ENCODE measurements at regions of chr7 and their contacts with region 1.

Region 1: GRCh38 chr7:104883718-104884452 is 130.1 kb upstream of the KMT2E start:
- DNase-seq: peak; percentile 61
- ATAC-seq: peak; percentile 92
- H3K4me3 ChIP-seq: no peak overlapping the region
- H3K27ac ChIP-seq: no peak overlapping the region
- H3K4me1 ChIP-seq: peaks cover 19% of the 10 kb centered on the region
- H3K27me3 ChIP-seq: no peaks in the 10 kb centered on the region
- CTCF ChIP-seq: peak; percentile 93 to 96 (median 94); a peak in 5 of 6 replicates
- EP300 ChIP-seq: no peak
- POLR2A ChIP-seq: no peak
- RAD21 ChIP-seq: peak; percentile 89

Region 2: DNA sequence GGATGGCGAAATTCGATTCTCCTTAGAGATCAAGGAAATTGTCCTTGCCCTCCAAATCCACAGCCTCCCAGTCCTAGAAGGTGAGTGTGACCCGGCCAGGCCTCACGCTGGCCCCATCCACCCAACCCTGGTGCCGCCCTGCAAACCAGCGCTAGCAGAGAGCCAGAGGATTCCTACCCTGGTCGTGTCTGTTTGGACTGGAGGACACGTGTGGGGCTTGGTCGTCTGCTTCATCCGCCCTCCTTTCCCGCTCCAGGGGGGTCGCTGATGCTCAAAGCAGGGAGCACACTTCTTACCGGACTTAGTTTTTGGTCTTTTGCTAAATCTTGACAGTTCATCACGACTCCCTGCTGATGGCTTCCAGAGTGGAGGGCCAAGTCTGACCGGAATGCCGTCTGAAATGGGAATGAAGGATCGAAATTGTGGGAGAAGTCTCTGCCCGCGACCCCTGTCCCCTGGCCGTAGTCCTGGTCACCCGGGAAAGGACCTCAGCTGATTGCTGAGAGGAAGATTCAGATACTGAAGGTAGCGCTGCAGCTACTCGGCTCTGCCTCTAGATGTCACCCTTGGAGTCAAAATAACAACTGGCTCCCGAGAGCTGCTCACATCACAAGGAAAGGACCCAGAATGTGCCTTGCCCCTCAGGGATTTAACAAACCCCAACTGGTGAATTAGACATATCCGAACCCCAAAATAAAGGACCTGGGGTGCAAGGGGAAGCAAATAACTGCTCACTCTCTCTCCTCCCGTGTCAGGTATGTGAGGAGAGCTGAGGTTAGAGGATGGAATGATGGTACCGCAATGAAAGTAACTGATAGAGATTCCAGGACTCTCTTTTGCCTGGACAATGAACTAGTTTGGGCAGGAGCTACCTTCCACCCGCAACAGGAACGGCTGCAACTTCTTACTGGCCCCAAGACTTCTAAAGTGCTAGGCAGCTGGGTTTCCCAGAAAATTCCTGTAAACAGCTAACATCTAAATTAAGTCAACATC is 652.5 kb before region 1 on chr7:
- CTCF ChIA-PET with region 1: interaction called, 18 read pairs
- POLR2A ChIA-PET with region 1: no interaction called
- RAD21 ChIA-PET with region 1: interaction called, 13 read pairs
- SMC1A ChIA-PET with region 1: interaction called, 3 read pairs
- in situ Hi-C with region 1: no loop called
- intact Hi-C with region 1: no loop called
- DNase-seq: no peak
- ATAC-seq: peak; percentile 96
- H3K4me3 ChIP-seq: no peak overlapping the region
- H3K27ac ChIP-seq: no peak overlapping the region
- H3K4me1 ChIP-seq: no peaks in the 10 kb centered on the region
- H3K27me3 ChIP-seq: no peaks in the 10 kb centered on the region
- CTCF ChIP-seq: peak; percentile 83 to 91 (median 87)
- EP300 ChIP-seq: no peak
- POLR2A ChIP-seq: no peak
- RAD21 ChIP-seq: peak; percentile 74

Region 3: GRCh38 chr7:104415700-104416099 is 468.2 kb before region 1 on chr7:
- CTCF ChIA-PET with region 1: no interaction called
- POLR2A ChIA-PET with region 1: no interaction called
- RAD21 ChIA-PET with region 1: no interaction called
- SMC1A ChIA-PET with region 1: no interaction called
- in situ Hi-C with region 1: no loop called
- intact Hi-C with region 1: no loop called
- DNase-seq: no peak
- ATAC-seq: peak; percentile 51; the same call in 2 of the 3 replicates
- H3K4me3 ChIP-seq: no peak overlapping the region
- H3K27ac ChIP-seq: no peak overlapping the region
- H3K4me1 ChIP-seq: no peaks in the 10 kb centered on the region
- H3K27me3 ChIP-seq: no peaks in the 10 kb centered on the region; a peak in 1 of 4 replicates
- CTCF ChIP-seq: no peak
- EP300 ChIP-seq: no peak
- POLR2A ChIP-seq: no peak
- RAD21 ChIP-seq: peak; percentile 9; the same call in 1 of the 2 replicates

Region 4: DNA sequence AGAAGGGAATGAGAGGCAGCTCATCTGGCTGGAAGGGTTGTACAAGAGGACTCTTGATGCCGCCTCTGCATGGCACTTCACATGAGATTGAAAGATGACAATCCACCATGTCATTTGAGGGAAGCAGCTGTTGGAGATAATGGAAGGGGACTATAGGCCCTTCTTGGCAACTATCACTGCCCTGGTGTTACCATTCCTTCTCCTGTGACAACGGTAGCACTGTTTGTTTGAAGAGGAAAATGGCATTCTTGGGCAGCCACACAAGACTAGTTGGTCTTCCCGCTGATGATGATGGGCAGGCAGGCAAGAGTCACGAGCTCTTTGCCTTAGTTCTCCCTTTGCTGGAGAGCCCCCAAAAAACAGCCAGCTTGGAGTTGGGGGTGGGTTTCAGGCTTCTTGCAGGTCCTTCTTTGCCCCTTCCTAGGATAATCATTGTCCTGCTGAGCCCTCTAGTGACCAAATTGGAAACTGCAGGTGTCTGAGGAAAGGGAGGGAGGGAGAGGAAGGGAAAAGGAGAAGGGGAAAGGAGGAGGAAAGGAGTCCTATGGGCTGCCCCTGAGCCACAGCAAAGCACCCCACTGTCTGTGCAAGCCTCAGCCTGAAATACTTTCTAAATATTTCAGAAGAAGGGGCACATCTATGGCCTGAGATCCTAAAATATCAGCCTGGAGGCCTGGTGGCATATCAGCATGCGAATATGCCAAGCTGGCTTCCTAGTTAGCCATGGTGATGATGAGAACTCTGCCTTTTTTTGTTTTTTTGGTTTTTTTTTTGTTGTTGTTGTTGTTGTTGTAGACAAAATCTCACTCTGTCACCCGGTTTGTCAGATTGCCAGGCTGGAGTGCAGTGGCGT is 35.5 kb before region 1 on chr7:
- CTCF ChIA-PET with region 1: interaction called, 16 read pairs
- POLR2A ChIA-PET with region 1: no interaction called
- RAD21 ChIA-PET with region 1: interaction called, 5 read pairs
- SMC1A ChIA-PET with region 1: interaction called, 18 read pairs
- in situ Hi-C with region 1: no loop called
- intact Hi-C with region 1: no loop called
- DNase-seq: no peak
- ATAC-seq: peak; percentile 78
- H3K4me3 ChIP-seq: no peak overlapping the region
- H3K27ac ChIP-seq: no peak overlapping the region
- H3K4me1 ChIP-seq: peaks cover 4% of the 10 kb centered on the region; the same call in 1 of the 2 replicates
- H3K27me3 ChIP-seq: no peaks in the 10 kb centered on the region
- CTCF ChIP-seq: peak; percentile 76 to 89 (median 79)
- EP300 ChIP-seq: no peak
- POLR2A ChIP-seq: no peak
- RAD21 ChIP-seq: peak; percentile 90

Region 5: GRCh38 chr7:104862719-104863118 is 21.2 kb before region 1 on chr7:
- CTCF ChIA-PET with region 1: interaction called, 24 read pairs
- POLR2A ChIA-PET with region 1: interaction called, 6 read pairs
- RAD21 ChIA-PET with region 1: interaction called, 7 read pairs
- SMC1A ChIA-PET with region 1: interaction called, 13 read pairs
- in situ Hi-C with region 1: no loop called
- intact Hi-C with region 1: no loop called
- DNase-seq: no peak
- ATAC-seq: no peak; the same call in 2 of the 3 replicates
- H3K4me3 ChIP-seq: no peak overlapping the region
- H3K27ac ChIP-seq: no peak overlapping the region
- H3K4me1 ChIP-seq: peaks cover 8% of the 10 kb centered on the region
- H3K27me3 ChIP-seq: no peaks in the 10 kb centered on the region
- CTCF ChIP-seq: no peak
- EP300 ChIP-seq: no peak
- POLR2A ChIP-seq: no peak
- RAD21 ChIP-seq: no peak

Region 6: DNA sequence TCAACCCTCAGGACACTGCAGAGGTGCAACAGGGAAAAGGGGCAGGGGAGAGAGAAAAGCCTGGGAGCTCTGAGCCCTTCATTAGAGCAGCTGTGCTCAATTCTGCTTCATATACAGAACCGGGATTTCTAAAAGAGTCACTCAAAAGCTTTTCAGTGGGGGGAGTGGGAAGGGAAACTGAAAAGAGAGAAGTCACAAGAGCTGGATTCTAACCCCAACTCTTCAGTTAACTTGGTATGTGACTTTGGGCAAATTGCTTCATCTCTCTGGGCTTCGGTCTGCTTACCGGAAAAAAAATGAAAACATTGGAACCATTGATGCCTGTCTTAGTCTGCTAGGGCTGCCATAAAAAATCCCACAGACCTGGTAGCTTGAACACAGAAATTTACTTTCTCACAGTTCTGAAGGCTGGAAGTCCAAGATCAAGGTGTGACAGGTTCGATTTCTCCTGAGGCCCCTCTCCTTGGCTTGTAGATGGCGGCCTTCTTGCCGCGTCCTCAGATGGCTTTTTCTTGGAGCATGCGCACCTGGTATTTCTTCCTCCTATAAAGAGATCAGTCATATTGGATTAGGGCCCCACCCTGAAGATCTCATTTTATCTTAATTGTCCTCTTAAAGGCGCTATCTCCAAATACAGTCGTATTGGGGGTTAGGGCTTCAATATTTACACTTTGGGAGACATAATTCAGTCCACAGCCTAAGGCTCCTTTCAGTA is 11.8 kb after region 1 on chr7:
- CTCF ChIA-PET with region 1: interaction called, 298 read pairs
- POLR2A ChIA-PET with region 1: interaction called, 25 read pairs
- RAD21 ChIA-PET with region 1: interaction called, 147 read pairs
- SMC1A ChIA-PET with region 1: interaction called, 236 read pairs
- in situ Hi-C with region 1: no loop called
- intact Hi-C with region 1: loop called (anchors 1 kb)
- DNase-seq: peak; percentile 83
- ATAC-seq: peak; percentile 55
- H3K4me3 ChIP-seq: peak overlapping the region; percentile 69
- H3K27ac ChIP-seq: peak overlapping the region; percentile 97
- H3K4me1 ChIP-seq: peaks cover 69% of the 10 kb centered on the region
- H3K27me3 ChIP-seq: no peaks in the 10 kb centered on the region
- CTCF ChIP-seq: no peak
- EP300 ChIP-seq: peak; percentile 58 to 60; a peak in 1 of 4 replicates
- POLR2A ChIP-seq: no peak
- RAD21 ChIP-seq: no peak

Region 7: GRCh38 chr7:104914421-104914820 is 30.5 kb after region 1 on chr7:
- CTCF ChIA-PET with region 1: interaction called, 581 read pairs
- POLR2A ChIA-PET with region 1: interaction called, 15 read pairs
- RAD21 ChIA-PET with region 1: interaction called, 217 read pairs
- SMC1A ChIA-PET with region 1: interaction called, 413 read pairs
- in situ Hi-C with region 1: loop called (anchors 5 kb)
- intact Hi-C with region 1: loop called (anchors 1 kb)
- DNase-seq: no peak
- ATAC-seq: no peak
- H3K4me3 ChIP-seq: no peak overlapping the region
- H3K27ac ChIP-seq: no peak overlapping the region
- H3K4me1 ChIP-seq: peaks cover 4% of the 10 kb centered on the region; the same call in 1 of the 2 replicates
- H3K27me3 ChIP-seq: no peaks in the 10 kb centered on the region
- CTCF ChIP-seq: no peak
- EP300 ChIP-seq: no peak
- POLR2A ChIP-seq: no peak
- RAD21 ChIP-seq: no peak

Region 8: GRCh38 chr7:105187302-105188169 is 303.7 kb after region 1 on chr7:
- CTCF ChIA-PET with region 1: no interaction called
- POLR2A ChIA-PET with region 1: no interaction called
- RAD21 ChIA-PET with region 1: no interaction called
- SMC1A ChIA-PET with region 1: no interaction called
- in situ Hi-C with region 1: no loop called
- intact Hi-C with region 1: no loop called
- DNase-seq: peak; percentile 37
- ATAC-seq: peak; percentile 83
- H3K4me3 ChIP-seq: peak overlapping the region; percentile 6; the same call in 1 of the 2 replicates
- H3K27ac ChIP-seq: peak overlapping the region; percentile 13; the same call in 1 of the 2 replicates
- H3K4me1 ChIP-seq: peaks cover 11% of the 10 kb centered on the region; the same call in 1 of the 2 replicates
- H3K27me3 ChIP-seq: no peaks in the 10 kb centered on the region
- CTCF ChIP-seq: no peak
- EP300 ChIP-seq: no peak
- POLR2A ChIP-seq: no peak
- RAD21 ChIP-seq: no peak